B cell (primary cell): ENCODE measurements at regions of chr3 and their contacts with region 1.

Region 1: GRCh38 chr3:57597122-57597923 is at the start of gene ARF4:
- DNase-seq: peak; percentile 100
- ATAC-seq: peak; percentile 88
- H3K4me3 ChIP-seq: peak within 1 kb of the TSS; percentile 67 to 99 (median 90)
- H3K4me3 Mint-ChIP-seq: peak within 1 kb of the TSS; percentile 96
- H3K27ac ChIP-seq: peak within 1 kb of the TSS; percentile 98
- H3K27ac Mint-ChIP-seq: peak within 1 kb of the TSS; percentile 97
- H3K4me1 ChIP-seq: peaks cover 29 to 34% of the 10 kb centered on the region in 2 donors
- H3K4me1 Mint-ChIP-seq: peaks cover 47% of the 10 kb centered on the region
- H3K27me3 ChIP-seq: no peaks in the 10 kb centered on the region
- H3K27me3 Mint-ChIP-seq: no peaks in the 10 kb centered on the region
- CTCF ChIP-seq: peak; percentile 17
- total RNA-seq, gene ARF4: 37.5 and 38.1 TPM in 2 replicates

Region 2: DNA sequence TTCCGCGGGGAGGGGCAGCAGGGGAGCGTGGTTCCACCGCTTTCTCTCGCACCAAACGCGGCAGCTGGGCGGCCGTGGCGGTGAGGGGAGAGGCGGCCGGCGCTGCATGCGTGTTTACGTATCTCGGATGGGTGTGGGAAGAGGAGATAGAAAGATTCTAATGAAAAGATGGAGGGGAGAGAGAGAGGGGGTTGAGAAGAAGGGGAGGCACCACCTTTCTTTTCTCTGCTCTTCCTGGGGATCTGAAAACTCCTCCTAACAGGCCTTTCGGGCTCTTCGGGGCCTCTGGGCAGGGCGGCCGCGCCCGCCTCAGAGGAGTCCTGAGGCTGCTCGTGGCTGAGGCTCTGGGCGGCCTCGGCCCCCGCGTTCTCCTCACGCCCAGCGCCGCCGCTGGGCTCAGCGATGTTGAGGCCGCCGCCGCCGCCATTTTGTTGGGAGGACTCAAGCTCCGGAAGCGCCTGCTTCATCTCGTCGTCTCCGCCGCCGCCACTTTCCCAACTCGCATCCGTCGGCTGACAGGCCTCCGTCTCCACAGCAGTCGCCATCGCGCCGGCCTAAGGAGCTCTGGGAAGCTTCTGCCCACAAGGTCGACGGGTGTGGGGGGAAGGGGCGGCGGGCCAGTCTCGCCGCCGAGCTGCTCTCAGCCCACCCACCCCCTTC is 914.7 kb before region 1 on chr3:
- CTCF ChIA-PET with region 1: no interaction called
- POLR2A ChIA-PET with region 1: no interaction called
- intact Hi-C with region 1: loop called (anchors 1 kb)
- DNase-seq: peak; percentile 91
- ATAC-seq: peak; percentile 69
- H3K4me3 ChIP-seq: peak overlapping the region; percentile 74 to 99 (median 85)
- H3K4me3 Mint-ChIP-seq: peak overlapping the region; percentile 99
- H3K27ac ChIP-seq: peak overlapping the region; percentile 98 to 99
- H3K27ac Mint-ChIP-seq: peak overlapping the region; percentile 99
- H3K4me1 ChIP-seq: peaks cover 16 to 24% of the 10 kb centered on the region in 2 donors
- H3K4me1 Mint-ChIP-seq: peaks cover 42% of the 10 kb centered on the region
- H3K27me3 ChIP-seq: no peaks in the 10 kb centered on the region
- H3K27me3 Mint-ChIP-seq: no peaks in the 10 kb centered on the region
- CTCF ChIP-seq: no peak

Region 3: DNA sequence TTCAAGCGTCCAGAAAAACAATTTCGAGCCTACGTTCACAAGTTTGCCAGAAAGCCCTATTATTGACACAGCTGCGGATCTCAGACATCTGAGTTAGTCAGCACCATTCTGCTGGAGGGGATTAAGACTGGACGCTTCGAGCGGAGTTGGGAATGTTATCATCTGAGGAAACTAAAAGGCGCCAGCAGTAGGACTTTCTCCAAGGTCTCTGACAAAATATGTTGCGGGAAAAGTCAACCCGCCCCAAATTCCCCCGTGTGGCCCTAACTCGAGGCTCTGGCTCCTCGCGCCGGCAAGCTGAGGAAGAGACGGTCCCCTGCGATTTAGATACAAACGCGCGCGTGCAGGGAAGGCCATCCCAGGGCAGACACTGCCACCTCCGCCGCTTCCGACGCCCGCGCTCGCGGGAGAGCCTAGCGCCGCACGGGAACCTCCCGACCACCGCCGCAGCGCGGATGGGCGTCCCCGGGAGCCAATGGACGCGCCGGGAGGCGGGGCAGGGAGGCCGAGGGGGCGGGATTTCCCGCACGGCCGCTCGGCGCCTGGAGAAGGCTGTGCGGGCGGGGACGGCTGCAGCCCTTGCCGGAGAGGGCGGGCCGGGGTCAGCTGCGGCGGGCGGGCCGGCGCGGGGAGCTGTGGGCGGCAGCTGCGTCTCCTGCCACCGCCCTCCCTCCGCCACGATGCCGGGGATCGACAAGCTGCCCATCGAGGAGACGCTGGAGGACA is 370.0 kb before region 1 on chr3 and contains the start of gene APPL1:
- CTCF ChIA-PET with region 1: no interaction called
- POLR2A ChIA-PET with region 1: interaction called, 3 read pairs
- intact Hi-C with region 1: loop called (anchors 1 kb)
- DNase-seq: peak; percentile 92
- ATAC-seq: peak; percentile 95
- H3K4me3 ChIP-seq: peak within 1 kb of the TSS; percentile 69 to 91 (median 77)
- H3K4me3 Mint-ChIP-seq: peak within 1 kb of the TSS; percentile 94
- H3K27ac ChIP-seq: peak within 1 kb of the TSS; percentile 55 to 79
- H3K27ac Mint-ChIP-seq: peak within 1 kb of the TSS; percentile 91
- H3K4me1 ChIP-seq: peaks cover 19 to 23% of the 10 kb centered on the region in 2 donors
- H3K4me1 Mint-ChIP-seq: peaks cover 38% of the 10 kb centered on the region
- H3K27me3 ChIP-seq: no peaks in the 10 kb centered on the region
- H3K27me3 Mint-ChIP-seq: no peaks in the 10 kb centered on the region
- CTCF ChIP-seq: no peak
- total RNA-seq, gene APPL1: 59.8 and 69.5 TPM in 2 replicates

Region 4: DNA sequence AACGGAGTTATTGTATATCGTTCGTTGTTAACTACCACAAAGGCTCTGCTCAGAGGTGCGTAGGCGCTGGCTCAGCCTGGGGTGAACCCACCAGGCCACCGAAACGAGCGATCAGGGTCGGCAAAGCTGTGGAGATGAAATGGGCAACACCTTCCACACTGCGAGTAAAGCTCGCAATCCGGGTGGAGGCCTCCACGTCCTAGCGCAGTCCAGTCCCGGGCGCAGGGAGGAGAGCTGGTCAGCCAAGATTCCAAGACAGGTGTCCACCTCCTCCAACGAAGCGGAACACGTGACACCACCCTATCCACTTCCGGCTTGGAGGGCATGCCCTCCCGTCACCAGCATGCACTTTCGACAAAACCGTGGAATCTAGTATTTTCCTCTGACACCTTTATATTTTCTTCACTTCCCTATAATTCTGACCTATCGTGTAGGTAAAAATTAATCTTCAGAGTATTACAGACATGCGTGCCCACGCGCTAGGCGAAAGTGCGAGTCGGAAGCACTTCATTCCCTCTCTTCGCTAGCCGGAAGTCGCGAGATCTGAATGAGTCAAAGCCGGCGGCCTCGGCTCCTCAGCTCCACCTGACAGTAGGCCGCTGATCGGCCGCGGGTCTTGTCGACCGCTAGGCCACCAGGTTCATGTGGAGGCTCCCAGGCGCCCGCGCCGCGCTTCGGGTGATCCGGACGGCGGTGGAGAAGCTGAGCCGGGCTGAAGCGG is 41.4 kb before region 1 on chr3 and contains the start of gene PDE12:
- CTCF ChIA-PET with region 1: interaction called, 16 read pairs
- POLR2A ChIA-PET with region 1: interaction called, 26 read pairs
- intact Hi-C with region 1: loop called (anchors 1 kb)
- DNase-seq: peak; percentile 95
- ATAC-seq: peak; percentile 84
- H3K4me3 ChIP-seq: peak within 1 kb of the TSS; percentile 70 to 90 (median 84)
- H3K4me3 Mint-ChIP-seq: peak within 1 kb of the TSS; percentile 88
- H3K27ac ChIP-seq: peak within 1 kb of the TSS; percentile 91 to 100
- H3K27ac Mint-ChIP-seq: peak within 1 kb of the TSS; percentile 100
- H3K4me1 ChIP-seq: peaks cover 14 to 30% of the 10 kb centered on the region in 2 donors
- H3K4me1 Mint-ChIP-seq: peaks cover 36% of the 10 kb centered on the region
- H3K27me3 ChIP-seq: no peaks in the 10 kb centered on the region
- H3K27me3 Mint-ChIP-seq: no peaks in the 10 kb centered on the region
- CTCF ChIP-seq: no peak
- total RNA-seq, gene PDE12: 18.3 and 19.6 TPM in 2 replicates

Region 5: DNA sequence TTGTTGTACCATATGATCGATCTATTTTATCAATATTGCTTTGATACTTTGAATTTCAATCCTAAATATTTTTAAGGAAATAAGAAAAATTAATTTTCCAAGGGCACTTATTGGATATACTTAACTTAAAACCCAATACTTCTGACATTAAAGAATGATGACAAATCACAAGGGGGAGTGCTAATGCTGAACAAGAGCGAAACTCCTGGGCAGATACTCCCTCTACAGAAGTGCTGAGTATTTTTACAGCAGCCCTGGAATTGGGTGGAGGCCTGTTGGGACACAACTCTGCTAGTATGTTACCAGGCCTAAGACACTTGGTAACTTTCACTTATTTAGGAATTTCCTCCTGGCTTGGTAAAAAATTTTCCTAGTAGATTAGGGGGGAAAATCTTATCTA is 49.4 kb after region 1 on chr3:
- CTCF ChIA-PET with region 1: no interaction called
- POLR2A ChIA-PET with region 1: no interaction called
- intact Hi-C with region 1: no loop called
- DNase-seq: no peak
- ATAC-seq: peak; percentile 21
- H3K4me3 ChIP-seq: no peak overlapping the region
- H3K4me3 Mint-ChIP-seq: no peak overlapping the region
- H3K27ac ChIP-seq: peak overlapping the region in 1 of 2 donors; percentile 64
- H3K27ac Mint-ChIP-seq: no peak overlapping the region
- H3K4me1 ChIP-seq: peaks cover 3 to 5% of the 10 kb centered on the region in 2 donors
- H3K4me1 Mint-ChIP-seq: peaks cover 10% of the 10 kb centered on the region
- H3K27me3 ChIP-seq: no peaks in the 10 kb centered on the region
- H3K27me3 Mint-ChIP-seq: no peaks in the 10 kb centered on the region
- CTCF ChIP-seq: peak; percentile 13

Region 6: GRCh38 chr3:57755668-57756527 is 158.6 kb after region 1 on chr3 and contains the start of gene SLMAP:
- CTCF ChIA-PET with region 1: interaction called, 8 read pairs
- POLR2A ChIA-PET with region 1: interaction called, 15 read pairs
- intact Hi-C with region 1: loop called (anchors 1 kb)
- DNase-seq: peak; percentile 96
- ATAC-seq: peak; percentile 93
- H3K4me3 ChIP-seq: peak within 1 kb of the TSS; percentile 77 to 99 (median 95)
- H3K4me3 Mint-ChIP-seq: peak within 1 kb of the TSS; percentile 99
- H3K27ac ChIP-seq: peak within 1 kb of the TSS; percentile 56 to 93
- H3K27ac Mint-ChIP-seq: peak within 1 kb of the TSS; percentile 93
- H3K4me1 ChIP-seq: peaks cover 23 to 26% of the 10 kb centered on the region in 2 donors
- H3K4me1 Mint-ChIP-seq: peaks cover 30% of the 10 kb centered on the region
- H3K27me3 ChIP-seq: no peaks in the 10 kb centered on the region
- H3K27me3 Mint-ChIP-seq: no peaks in the 10 kb centered on the region
- CTCF ChIP-seq: no peak
- total RNA-seq, gene SLMAP: 67.2 and 70.8 TPM in 2 replicates